Posterior cingulate gyrus (tissue), 11 donors: ENCODE measurements at regions of chr12 and their contacts with region 1.

Region 1: DNA sequence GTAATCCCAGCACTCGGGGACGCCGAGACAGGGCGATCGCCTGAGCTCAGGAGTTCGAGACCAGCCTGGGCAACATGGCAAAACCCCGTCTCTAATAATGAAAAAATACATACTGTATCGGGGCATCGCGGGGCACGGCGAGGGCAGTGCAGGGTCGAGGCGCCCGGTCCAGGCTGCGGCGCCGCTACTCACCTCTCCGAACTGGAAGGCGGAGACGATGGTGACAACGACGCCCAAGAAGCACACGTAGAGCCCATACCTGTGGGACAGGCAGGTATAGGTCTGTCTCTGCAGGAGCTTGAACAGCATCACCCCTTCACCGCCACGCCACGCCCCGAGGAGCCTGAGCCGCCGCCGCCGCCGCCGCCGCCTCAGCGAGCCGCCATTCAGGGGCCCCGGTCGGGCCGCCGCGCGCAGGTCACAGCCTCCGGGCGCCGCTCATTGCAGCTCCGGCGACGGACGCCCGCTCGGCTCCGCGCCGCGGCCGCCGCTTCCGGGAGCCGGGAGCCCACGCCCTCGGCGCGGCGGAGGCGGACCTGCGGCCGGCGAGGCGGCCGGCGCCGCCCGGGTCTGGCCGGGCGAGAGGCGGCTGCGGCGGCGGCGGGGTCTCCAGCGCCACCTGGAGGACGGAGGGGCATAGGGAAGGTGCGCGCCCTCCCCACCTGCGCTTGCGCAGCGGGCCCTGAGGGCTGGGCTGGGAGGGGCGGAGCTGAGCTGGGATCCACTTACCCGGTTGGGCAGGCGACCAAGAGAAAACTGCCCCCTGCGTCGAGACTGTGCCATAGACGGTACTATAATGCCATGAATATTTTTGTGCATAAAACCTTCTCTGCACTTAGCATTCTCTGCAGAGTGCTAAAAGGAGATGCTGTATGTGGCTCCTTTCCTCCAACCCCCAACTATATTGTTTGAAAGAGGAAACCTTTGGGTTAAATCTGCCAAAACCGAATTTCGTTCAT is at the start of gene GNPTAB:
- DNase-seq: peak; percentile 84 to 99 (median 90)

Region 2: DNA sequence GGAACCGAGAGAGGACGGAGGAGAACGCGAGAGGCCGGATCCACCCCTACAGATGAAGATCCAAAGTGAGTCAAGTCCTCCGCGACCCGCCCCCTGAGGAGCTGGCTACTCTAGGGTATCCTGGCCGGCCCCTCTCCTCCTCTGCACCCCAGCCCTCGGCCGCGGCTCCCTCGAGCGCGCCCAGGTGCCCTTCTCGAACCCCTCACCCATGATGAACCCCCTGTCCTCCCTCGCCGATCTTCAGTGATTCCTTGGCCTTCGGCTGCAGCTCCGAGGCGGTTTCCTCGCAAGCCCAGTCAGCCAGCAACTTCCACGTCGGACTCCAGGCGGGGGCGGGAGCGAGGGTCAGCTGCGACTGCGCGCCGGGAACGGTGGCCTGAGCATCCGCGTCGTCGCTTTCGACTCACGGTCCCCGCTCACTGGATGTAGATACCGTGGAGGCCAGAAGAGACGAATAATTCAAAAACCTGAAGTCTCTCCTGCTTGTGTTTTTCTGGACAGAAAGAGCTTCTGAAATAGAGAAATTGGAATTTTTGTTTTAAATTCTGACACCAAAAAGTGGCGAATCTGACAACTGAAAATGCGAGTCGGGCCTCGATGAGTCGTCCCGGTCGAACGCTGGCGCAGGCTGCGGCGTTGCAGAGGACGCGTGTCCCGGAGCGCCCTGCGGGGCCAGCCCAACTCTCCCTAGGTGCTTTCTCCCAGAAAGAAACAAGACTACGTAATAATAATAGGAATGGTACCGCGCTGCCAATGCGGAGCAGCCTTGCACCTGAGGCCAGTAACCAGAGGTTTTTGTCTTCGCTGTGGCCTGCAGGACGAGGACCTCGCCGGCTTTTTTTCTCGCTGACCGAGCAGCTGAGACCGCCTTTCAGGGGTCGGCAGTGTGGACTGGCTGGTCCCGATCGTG is 423.0 kb before region 1 on chr12 and contains the start of gene ARL1:
- intact Hi-C with region 1: loop called (anchors 5 kb)
- DNase-seq: peak; percentile 80 to 98 (median 85)

Region 3: GRCh38 chr12:101773650-101774162 is 56.9 kb before region 1 on chr12:
- intact Hi-C with region 1: loop called (anchors 2 kb)
- DNase-seq: peak in 7 of 10 donors; percentile 30 to 90 (median 62)

Region 4: GRCh38 chr12:101792051-101792931 is 38.4 kb before region 1 on chr12:
- intact Hi-C with region 1: loop called (anchors 5 kb)
- DNase-seq: peak in 1 of 10 donors; percentile 46

Region 5: GRCh38 chr12:102033991-102034745 is 203.5 kb after region 1 on chr12:
- intact Hi-C with region 1: no loop called
- DNase-seq: no peak